ENCODE measurements at regions of chr1 and their contacts with region 1.

Region 1: GRCh38 chr1:178093205-178093957 is 523 bp upstream of the RASAL2 start:
- DNase-seq: peak; percentile 90 to 91
- H3K4me3 ChIP-seq: peak overlapping the region; percentile 85
- H3K27ac ChIP-seq: peak overlapping the region; percentile 76
- H3K4me1 ChIP-seq: peaks cover 48% of the 10 kb centered on the region
- H3K27me3 ChIP-seq: no peaks in the 10 kb centered on the region
- CTCF ChIP-seq: no peak

Region 2: GRCh38 chr1:178060789-178061556 is 32.4 kb before region 1 on chr1:
- CTCF ChIA-PET with region 1: interaction called, 5 read pairs
- POLR2A ChIA-PET with region 1: interaction called, 3 read pairs
- intact Hi-C with region 1: loop called (anchors 2 kb)
- DNase-seq: peak; percentile 51 to 91
- H3K4me3 ChIP-seq: peak overlapping the region; percentile 36; the same call in 1 of the 2 replicates
- H3K27ac ChIP-seq: peak overlapping the region; percentile 87
- H3K4me1 ChIP-seq: peaks cover 39% of the 10 kb centered on the region
- H3K27me3 ChIP-seq: no peaks in the 10 kb centered on the region
- CTCF ChIP-seq: no peak

Region 3: DNA sequence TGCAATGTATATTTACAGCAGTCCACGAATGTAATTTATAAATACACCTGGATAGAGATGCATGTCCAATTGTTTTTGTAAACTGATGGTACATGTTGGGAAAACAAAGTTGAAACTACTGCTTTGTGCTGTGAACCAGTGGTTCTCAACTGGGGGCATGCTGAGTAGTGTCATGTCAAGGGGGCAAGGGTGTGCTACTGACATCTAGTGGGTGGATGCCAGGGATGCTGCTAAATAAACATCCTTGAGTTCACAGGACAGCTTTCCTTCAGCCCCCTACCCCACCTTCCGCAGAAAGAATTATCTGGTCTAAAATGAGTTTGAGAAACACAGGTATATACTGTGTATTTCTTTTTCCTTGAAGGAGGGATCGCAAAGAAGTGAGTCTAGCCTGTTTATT is 96.4 kb after region 1 on chr1:
- CTCF ChIA-PET with region 1: interaction called, 3 read pairs
- POLR2A ChIA-PET with region 1: interaction called, 3 read pairs
- intact Hi-C with region 1: loop called (anchors 1 kb)
- DNase-seq: no peak
- H3K4me3 ChIP-seq: no peak overlapping the region
- H3K27ac ChIP-seq: no peak overlapping the region
- H3K4me1 ChIP-seq: peaks cover 8% of the 10 kb centered on the region; the same call in 1 of the 2 replicates
- H3K27me3 ChIP-seq: no peaks in the 10 kb centered on the region
- CTCF ChIP-seq: peak; percentile 52

Region 4: GRCh38 chr1:178230909-178231308 is 137.5 kb after region 1 on chr1:
- CTCF ChIA-PET with region 1: no interaction called
- POLR2A ChIA-PET with region 1: no interaction called
- intact Hi-C with region 1: no loop called
- DNase-seq: no peak
- H3K4me3 ChIP-seq: no peak overlapping the region
- H3K27ac ChIP-seq: no peak overlapping the region
- H3K4me1 ChIP-seq: no peaks in the 10 kb centered on the region
- H3K27me3 ChIP-seq: no peaks in the 10 kb centered on the region
- CTCF ChIP-seq: no peak

Region 5: DNA sequence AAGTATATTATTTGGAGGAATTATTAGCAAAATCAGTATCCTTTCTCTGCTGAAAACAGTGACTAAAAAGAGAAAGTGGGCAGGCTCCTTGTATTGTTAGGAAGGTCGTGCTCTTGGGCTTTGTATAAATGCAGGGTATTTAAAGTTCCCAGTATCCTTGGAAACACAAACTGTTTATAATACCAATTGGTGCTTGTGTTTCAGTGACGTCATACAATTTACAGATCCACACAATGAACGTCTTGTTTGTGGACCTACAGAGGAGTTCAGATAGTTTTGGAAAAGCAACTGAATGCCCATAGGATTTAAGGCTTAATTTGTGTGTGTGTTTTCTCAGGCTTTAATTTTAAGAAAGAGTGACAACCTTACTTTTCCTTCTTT is 168.7 kb after region 1 on chr1:
- CTCF ChIA-PET with region 1: no interaction called
- POLR2A ChIA-PET with region 1: interaction called, 24 read pairs
- intact Hi-C with region 1: no loop called
- DNase-seq: peak in 1 of 2 experiments; percentile 38
- H3K4me3 ChIP-seq: no peak overlapping the region
- H3K27ac ChIP-seq: no peak overlapping the region
- H3K4me1 ChIP-seq: peaks cover 11% of the 10 kb centered on the region
- H3K27me3 ChIP-seq: no peaks in the 10 kb centered on the region
- CTCF ChIP-seq: no peak

Region 6: DNA sequence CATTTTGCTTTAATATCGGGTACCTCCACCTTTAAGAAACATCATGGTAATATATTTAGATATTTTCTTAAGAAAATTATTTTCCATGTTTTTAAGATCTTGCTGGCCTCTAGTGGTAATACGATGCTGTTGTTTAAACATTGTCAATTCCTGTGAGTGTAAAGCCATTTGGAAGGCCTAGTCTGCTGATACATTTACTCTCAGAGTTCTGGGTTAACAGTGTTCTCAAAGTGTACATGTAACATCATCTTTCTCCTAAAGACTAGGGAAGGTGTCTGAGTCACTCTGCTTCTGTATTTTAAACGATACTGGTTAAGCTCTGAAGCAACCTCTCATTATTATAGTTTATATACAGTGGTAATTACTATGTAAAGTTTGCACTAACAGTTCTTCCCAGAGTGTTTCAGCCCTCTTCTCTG is 189.6 kb after region 1 on chr1:
- CTCF ChIA-PET with region 1: interaction called, 4 read pairs
- POLR2A ChIA-PET with region 1: no interaction called
- intact Hi-C with region 1: loop called (anchors 2 kb)
- DNase-seq: peak in 1 of 2 experiments; percentile 67
- H3K4me3 ChIP-seq: no peak overlapping the region
- H3K27ac ChIP-seq: 0 out of 2 replicates have a peak overlapping the region, but pooled peaks have one; percentile 25
- H3K4me1 ChIP-seq: peaks cover 27% of the 10 kb centered on the region
- H3K27me3 ChIP-seq: no peaks in the 10 kb centered on the region
- CTCF ChIP-seq: peak; percentile 68

Measured in PC-9 (cell line).